HCT116 (cell line): ENCODE measurements at regions of chr4 and their contacts with region 1.

Region 1: GRCh38 chr4:42519803-42520417 is 122.6 kb downstream of the SHISA3 start:
- DNase-seq: peak; percentile 28
- ATAC-seq: peak; percentile 86
- H3K4me3 ChIP-seq: no peak overlapping the region
- H3K27ac ChIP-seq: no peak overlapping the region
- H3K4me1 ChIP-seq: no peaks in the 10 kb centered on the region
- H3K27me3 ChIP-seq: peaks cover 3% of the 10 kb centered on the region; the same call in 1 of the 2 replicates
- CTCF ChIP-seq: peak; percentile 39 to 67 (median 64); a peak in 5 of 6 replicates
- POLR2A ChIP-seq: no peak
- RAD21 ChIP-seq: peak; percentile 71

Region 2: DNA sequence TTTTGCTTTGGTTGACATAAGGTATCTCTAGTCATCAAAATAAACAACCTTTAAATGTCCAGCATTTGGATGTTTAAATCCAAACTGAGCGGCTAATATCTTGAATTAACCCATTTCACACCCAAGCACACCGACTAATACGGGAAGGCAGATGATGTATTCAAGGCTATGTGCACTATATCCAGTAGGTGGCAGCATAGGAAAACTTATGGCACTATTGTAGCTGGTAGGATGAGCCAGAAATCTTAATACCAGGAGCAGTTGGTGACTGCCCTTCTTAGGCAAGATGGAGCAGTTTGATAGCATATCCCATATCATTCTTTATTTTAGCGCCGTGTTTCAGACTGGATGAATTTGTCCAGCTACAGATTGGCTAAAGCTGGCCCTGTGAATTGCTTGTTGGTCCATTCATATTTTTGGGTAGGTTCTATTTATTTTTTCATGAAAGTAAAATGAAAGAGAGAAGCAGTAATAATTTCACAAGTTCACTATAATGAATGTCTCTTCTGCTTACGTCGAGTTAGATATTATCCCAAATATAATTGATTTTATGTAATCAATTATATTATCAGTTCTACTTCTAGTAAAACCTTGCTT is 1238.8 kb before region 1 on chr4:
- CTCF ChIA-PET with region 1: interaction called, 5 read pairs
- POLR2A ChIA-PET with region 1: no interaction called
- RAD21 ChIA-PET with region 1: no interaction called
- intact Hi-C with region 1: loop called (anchors 10 kb)
- DNase-seq: peak; percentile 82
- ATAC-seq: peak; percentile 100
- H3K4me3 ChIP-seq: no peak overlapping the region
- H3K27ac ChIP-seq: no peak overlapping the region
- H3K4me1 ChIP-seq: no peaks in the 10 kb centered on the region
- H3K27me3 ChIP-seq: no peaks in the 10 kb centered on the region
- CTCF ChIP-seq: peak; percentile 75 to 91 (median 90)
- POLR2A ChIP-seq: no peak
- RAD21 ChIP-seq: peak; percentile 99

Region 3: DNA sequence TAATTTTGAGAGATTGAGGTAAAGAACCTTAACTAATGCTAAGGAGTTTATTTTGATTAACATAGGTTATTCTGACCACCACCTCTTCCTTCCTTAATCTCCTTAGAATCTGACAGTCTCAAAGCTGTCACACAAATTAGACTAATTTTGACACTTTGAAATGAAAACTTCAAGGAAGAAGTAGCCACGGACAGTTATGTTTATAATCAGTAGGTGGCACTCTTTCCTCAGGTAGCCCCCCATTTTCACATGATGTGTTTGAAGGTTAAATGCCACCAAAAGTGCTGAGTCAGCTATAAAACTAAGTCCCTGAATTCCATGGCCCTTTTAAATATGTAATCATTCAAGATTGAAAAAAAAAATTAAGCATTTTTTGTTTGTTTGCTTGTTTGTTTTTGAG is 562.3 kb before region 1 on chr4:
- CTCF ChIA-PET with region 1: no interaction called
- POLR2A ChIA-PET with region 1: no interaction called
- RAD21 ChIA-PET with region 1: interaction called in 1 of 2 experiments, 3 read pairs
- intact Hi-C with region 1: loop called (anchors 5 kb)
- DNase-seq: peak; percentile 24
- ATAC-seq: peak; percentile 59; the same call in 1 of the 2 replicates
- H3K4me3 ChIP-seq: no peak overlapping the region
- H3K27ac ChIP-seq: no peak overlapping the region
- H3K4me1 ChIP-seq: no peaks in the 10 kb centered on the region
- H3K27me3 ChIP-seq: no peaks in the 10 kb centered on the region
- CTCF ChIP-seq: peak; percentile 30 to 64 (median 51); a peak in 5 of 6 replicates
- POLR2A ChIP-seq: no peak
- RAD21 ChIP-seq: peak; percentile 63

Region 4: GRCh38 chr4:42018451-42018850 is 501.5 kb before region 1 on chr4:
- CTCF ChIA-PET with region 1: no interaction called
- POLR2A ChIA-PET with region 1: no interaction called
- RAD21 ChIA-PET with region 1: no interaction called
- intact Hi-C with region 1: no loop called
- DNase-seq: no peak
- ATAC-seq: no peak
- H3K4me3 ChIP-seq: no peak overlapping the region
- H3K27ac ChIP-seq: no peak overlapping the region
- H3K4me1 ChIP-seq: no peaks in the 10 kb centered on the region
- H3K27me3 ChIP-seq: no peaks in the 10 kb centered on the region
- CTCF ChIP-seq: no peak
- POLR2A ChIP-seq: no peak
- RAD21 ChIP-seq: no peak

Region 5: DNA sequence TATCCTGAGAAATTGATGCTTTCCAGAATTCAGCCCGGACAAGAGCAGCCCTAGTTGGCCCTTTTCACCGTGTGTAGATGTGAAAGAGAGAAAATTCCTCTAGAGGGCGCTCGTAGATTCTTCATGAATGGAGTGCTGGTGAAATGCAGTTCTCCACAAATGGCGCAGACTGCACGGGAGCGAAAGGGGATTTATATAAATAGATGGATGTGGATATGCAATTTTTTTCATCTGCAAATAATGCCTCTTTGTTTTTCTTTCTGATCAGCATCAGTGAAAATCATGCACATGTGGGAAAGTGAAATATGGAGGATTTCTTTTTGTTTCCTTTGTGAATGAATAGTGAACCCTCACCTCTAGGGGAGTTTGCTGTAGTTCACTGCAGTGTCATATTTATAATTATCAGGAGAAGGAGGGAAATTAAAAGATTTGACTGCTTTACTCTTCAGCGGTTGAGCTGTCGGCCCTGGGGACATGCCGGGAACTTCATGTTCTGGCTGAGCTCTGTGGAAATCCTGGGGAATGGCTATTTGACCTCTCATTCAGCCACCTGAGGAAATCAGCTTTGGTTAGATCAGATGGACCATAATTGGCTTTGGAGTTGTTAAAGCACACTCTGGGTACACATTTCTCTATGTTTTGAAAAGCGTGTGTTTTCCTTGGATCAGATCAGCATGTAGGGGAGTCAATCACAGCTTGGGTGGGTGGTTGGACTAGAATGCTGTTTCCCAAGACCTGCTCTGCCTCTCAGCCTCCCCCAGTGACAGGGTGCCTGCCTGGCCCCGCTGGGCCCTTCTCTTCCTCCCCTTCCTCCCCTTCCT is 237.6 kb before region 1 on chr4:
- CTCF ChIA-PET with region 1: interaction called, 38 read pairs
- POLR2A ChIA-PET with region 1: no interaction called
- RAD21 ChIA-PET with region 1: interaction called, 4 to 7 read pairs
- intact Hi-C with region 1: loop called (anchors 1 kb)
- DNase-seq: peak; percentile 76
- ATAC-seq: peak; percentile 90
- H3K4me3 ChIP-seq: no peak overlapping the region; a peak in 1 of 4 replicates
- H3K27ac ChIP-seq: no peak overlapping the region
- H3K4me1 ChIP-seq: peaks cover 0 to 7% of the 10 kb centered on the region in 2 experiments; a peak in 1 of 4 replicates
- H3K27me3 ChIP-seq: no peaks in the 10 kb centered on the region
- CTCF ChIP-seq: peak; percentile 56 to 85 (median 81)
- POLR2A ChIP-seq: no peak
- RAD21 ChIP-seq: peak; percentile 85

Region 6: GRCh38 chr4:42371306-42372252 is 148.3 kb before region 1 on chr4:
- CTCF ChIA-PET with region 1: interaction called, 59 read pairs
- POLR2A ChIA-PET with region 1: no interaction called
- RAD21 ChIA-PET with region 1: interaction called, 4 to 7 read pairs
- intact Hi-C with region 1: loop called (anchors 1 kb)
- DNase-seq: peak; percentile 33
- ATAC-seq: peak; percentile 55; the same call in 1 of the 2 replicates
- H3K4me3 ChIP-seq: no peak overlapping the region
- H3K27ac ChIP-seq: no peak overlapping the region
- H3K4me1 ChIP-seq: no peaks in the 10 kb centered on the region
- H3K27me3 ChIP-seq: no peaks in the 10 kb centered on the region
- CTCF ChIP-seq: peak; percentile 35 to 57 (median 51); a peak in 5 of 6 replicates
- POLR2A ChIP-seq: no peak
- RAD21 ChIP-seq: peak; percentile 54

Region 7: GRCh38 chr4:42401171-42401570 is 118.7 kb before region 1 on chr4:
- CTCF ChIA-PET with region 1: interaction called, 11 read pairs
- POLR2A ChIA-PET with region 1: no interaction called
- RAD21 ChIA-PET with region 1: no interaction called
- intact Hi-C with region 1: no loop called
- DNase-seq: no peak
- ATAC-seq: peak; percentile 73
- H3K4me3 ChIP-seq: no peak overlapping the region
- H3K27ac ChIP-seq: no peak overlapping the region
- H3K4me1 ChIP-seq: no peaks in the 10 kb centered on the region
- H3K27me3 ChIP-seq: no peaks in the 10 kb centered on the region
- CTCF ChIP-seq: peak in 2 of 3 experiments; percentile 26 to 29; a peak in 2 of 6 replicates
- POLR2A ChIP-seq: no peak
- RAD21 ChIP-seq: peak; percentile 36